HepG2 (cell line): ENCODE measurements at regions of chr2 and their contacts with region 1.

Region 1: DNA sequence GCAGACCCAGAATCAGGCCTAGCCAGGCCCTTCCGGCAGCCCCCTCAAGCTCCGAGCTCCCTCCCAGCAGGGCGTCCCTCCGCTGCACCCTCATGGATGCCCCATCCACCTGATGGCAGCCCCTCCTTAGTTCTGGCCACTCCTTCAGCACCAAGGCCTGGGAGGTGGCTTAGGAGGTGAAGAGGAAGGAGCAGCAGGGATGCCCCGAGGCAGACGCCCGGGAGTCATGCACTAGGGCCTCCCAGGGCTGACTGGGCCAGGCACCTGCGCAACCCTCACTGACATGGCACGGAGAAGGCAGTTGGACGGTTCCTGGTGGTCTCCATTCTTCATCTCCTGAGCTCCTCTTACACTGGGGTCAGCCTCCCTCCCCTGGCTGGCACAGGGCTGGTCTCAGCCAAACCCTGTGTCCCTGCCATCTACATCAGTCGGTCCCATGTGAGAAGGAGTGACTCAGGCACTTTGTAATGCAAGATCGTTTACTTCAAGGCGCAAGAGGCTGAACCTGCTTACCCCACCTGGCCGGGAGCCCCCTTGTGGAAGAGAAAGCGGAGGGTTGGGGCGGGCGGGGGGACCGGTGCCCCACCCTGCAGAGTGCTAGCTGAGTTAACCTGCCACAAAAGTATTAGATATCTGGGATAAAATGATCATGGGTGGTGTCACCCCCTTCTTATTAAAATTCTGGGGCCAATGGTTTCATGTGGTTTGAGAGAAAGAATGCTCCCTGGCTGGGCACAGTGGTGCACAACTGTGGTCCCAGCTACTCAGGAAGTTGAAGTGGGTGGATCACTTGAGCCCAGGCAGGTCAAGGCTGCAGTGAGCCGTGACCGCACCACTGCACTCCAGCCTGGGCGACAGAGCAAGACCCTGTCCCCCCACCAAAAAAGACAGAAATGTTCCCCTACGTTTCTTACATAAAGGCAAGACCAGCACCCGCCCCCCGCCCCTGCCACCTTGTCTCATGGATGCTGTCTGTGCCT is 53.3 kb upstream of the ID2 start:
- DNase-seq: no peak
- ATAC-seq: no peak
- H3K4me3 ChIP-seq: peak overlapping the region in 1 of 3 experiments; percentile 80; a peak in 1 of 6 replicates
- H3K27ac ChIP-seq: peak overlapping the region; percentile 84
- H3K4me1 ChIP-seq: peaks cover 100% of the 10 kb centered on the region
- H3K27me3 ChIP-seq: no peaks in the 10 kb centered on the region; a peak in 1 of 5 replicates
- CTCF ChIP-seq: no peak
- EP300 ChIP-seq: no peak
- POLR2A ChIP-seq: no peak
- RAD21 ChIP-seq: no peak

Region 2: GRCh38 chr2:8229546-8229986 is 399.0 kb before region 1 on chr2:
- CTCF ChIA-PET with region 1: no interaction called
- POLR2A ChIA-PET with region 1: no interaction called
- in situ Hi-C with region 1: no loop called
- intact Hi-C with region 1: no loop called
- DNase-seq: peak; percentile 28
- ATAC-seq: peak; percentile 68
- H3K4me3 ChIP-seq: no peak overlapping the region
- H3K27ac ChIP-seq: no peak overlapping the region
- H3K4me1 ChIP-seq: no peaks in the 10 kb centered on the region
- H3K27me3 ChIP-seq: 0 out of 5 replicates have a peak, but pooled peaks cover 0 to under 1% of the 10 kb centered on the region in 2 experiments
- CTCF ChIP-seq: no peak
- EP300 ChIP-seq: no peak
- POLR2A ChIP-seq: no peak
- RAD21 ChIP-seq: no peak

Region 3: GRCh38 chr2:8412586-8412985 is 215.9 kb before region 1 on chr2:
- CTCF ChIA-PET with region 1: no interaction called
- POLR2A ChIA-PET with region 1: no interaction called
- in situ Hi-C with region 1: no loop called
- intact Hi-C with region 1: loop called (anchors 10 kb)
- DNase-seq: no peak
- ATAC-seq: no peak; the same call in 2 of the 3 replicates
- H3K4me3 ChIP-seq: no peak overlapping the region
- H3K27ac ChIP-seq: peak overlapping the region; percentile 80
- H3K4me1 ChIP-seq: peaks cover 72% of the 10 kb centered on the region
- H3K27me3 ChIP-seq: no peaks in the 10 kb centered on the region; a peak in 1 of 5 replicates
- CTCF ChIP-seq: no peak
- EP300 ChIP-seq: no peak
- POLR2A ChIP-seq: no peak
- RAD21 ChIP-seq: no peak

Region 4: DNA sequence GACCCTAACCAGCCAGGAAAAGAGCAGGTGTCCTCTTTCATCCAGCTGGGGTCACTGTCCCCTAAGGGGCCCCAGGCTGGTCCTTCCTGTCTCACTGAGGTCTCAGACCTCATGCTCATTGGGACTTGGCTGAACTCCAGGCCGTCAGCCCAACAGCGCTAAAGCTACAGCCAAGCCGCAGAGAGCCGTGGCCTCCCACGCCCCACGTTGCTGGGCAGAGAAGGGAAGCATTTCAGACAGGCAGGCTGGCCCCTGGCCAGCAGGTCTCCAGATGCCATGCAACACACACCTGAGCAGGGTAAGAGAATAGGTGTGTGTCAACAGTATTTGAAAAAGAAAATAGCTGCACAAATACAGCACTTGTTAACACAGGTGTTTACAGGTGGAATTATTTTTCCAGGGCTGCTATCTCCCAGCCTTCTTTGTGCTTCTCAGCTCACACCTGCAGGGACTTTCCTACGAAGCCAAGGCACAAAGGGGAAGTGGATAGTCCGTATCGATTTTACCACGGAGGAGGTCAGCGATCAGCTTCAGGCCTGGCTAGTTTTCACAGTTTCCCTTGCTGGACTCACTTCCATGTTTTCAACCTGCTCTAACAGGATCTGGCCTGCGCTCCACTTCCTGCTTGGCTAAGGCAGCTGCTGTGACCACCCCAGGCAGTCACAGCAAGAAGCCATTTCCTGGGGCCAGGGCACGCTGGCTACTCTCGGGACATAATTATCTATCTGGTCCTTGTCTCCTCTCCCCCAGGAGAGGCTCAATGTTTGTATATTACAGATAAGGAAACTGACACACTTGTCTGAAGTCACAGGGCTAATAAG is 102.7 kb before region 1 on chr2:
- CTCF ChIA-PET with region 1: no interaction called
- POLR2A ChIA-PET with region 1: interaction called, 11 read pairs
- in situ Hi-C with region 1: no loop called
- intact Hi-C with region 1: loop called (anchors 1 kb)
- DNase-seq: peak; percentile 92
- ATAC-seq: peak; percentile 96
- H3K4me3 ChIP-seq: peak overlapping the region; percentile 26 to 64 (median 42)
- H3K27ac ChIP-seq: no peak overlapping the region
- H3K4me1 ChIP-seq: peaks cover 38% of the 10 kb centered on the region
- H3K27me3 ChIP-seq: peaks cover 5 to 33% of the 10 kb centered on the region in 2 experiments; a peak in 4 of 5 replicates
- CTCF ChIP-seq: peak; percentile 97
- EP300 ChIP-seq: peak; percentile 11 to 67; a peak in 2 of 4 replicates
- POLR2A ChIP-seq: no peak
- RAD21 ChIP-seq: peak; percentile 99

Region 5: DNA sequence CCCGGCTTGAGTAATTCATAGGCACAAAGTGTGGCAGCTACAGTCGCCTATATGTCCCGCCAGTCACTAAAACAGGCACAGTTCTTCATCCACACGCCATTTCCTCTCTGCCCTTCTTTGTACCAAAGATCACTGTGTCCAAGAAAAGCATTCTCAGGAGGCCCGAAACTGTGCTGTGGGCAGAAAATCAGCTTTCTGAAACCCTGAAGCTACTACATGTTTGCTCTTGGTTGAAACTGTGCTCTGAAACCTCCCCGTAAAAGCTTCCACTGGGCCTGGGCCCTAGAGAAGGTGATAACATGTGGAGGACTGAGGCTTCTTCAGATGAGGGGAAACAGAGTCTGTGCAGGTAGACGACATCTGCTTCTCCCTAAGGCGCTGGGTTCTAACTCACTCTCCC is 22.3 kb before region 1 on chr2:
- CTCF ChIA-PET with region 1: no interaction called
- POLR2A ChIA-PET with region 1: interaction called, 112 read pairs
- in situ Hi-C with region 1: no loop called
- intact Hi-C with region 1: no loop called
- DNase-seq: no peak
- ATAC-seq: no peak
- H3K4me3 ChIP-seq: no peak overlapping the region
- H3K27ac ChIP-seq: no peak overlapping the region
- H3K4me1 ChIP-seq: peaks cover 66% of the 10 kb centered on the region
- H3K27me3 ChIP-seq: no peaks in the 10 kb centered on the region
- CTCF ChIP-seq: no peak
- EP300 ChIP-seq: no peak
- POLR2A ChIP-seq: no peak
- RAD21 ChIP-seq: no peak

Region 6: GRCh38 chr2:8612734-8613179 is 15.8 kb before region 1 on chr2:
- CTCF ChIA-PET with region 1: no interaction called
- POLR2A ChIA-PET with region 1: interaction called, 112 read pairs
- in situ Hi-C with region 1: no loop called
- intact Hi-C with region 1: loop called (anchors 1 kb)
- DNase-seq: peak; percentile 91
- ATAC-seq: peak; percentile 67
- H3K4me3 ChIP-seq: peak overlapping the region in 1 of 3 experiments; percentile 38; a peak in 2 of 6 replicates
- H3K27ac ChIP-seq: peak overlapping the region; percentile 72
- H3K4me1 ChIP-seq: peaks cover 66% of the 10 kb centered on the region
- H3K27me3 ChIP-seq: no peaks in the 10 kb centered on the region
- CTCF ChIP-seq: no peak; the same call in 1 of the 2 replicates
- EP300 ChIP-seq: peak in 1 of 2 experiments; percentile 88; a peak in 1 of 4 replicates
- POLR2A ChIP-seq: no peak
- RAD21 ChIP-seq: peak; percentile 14; the same call in 1 of the 2 replicates

Region 7: DNA sequence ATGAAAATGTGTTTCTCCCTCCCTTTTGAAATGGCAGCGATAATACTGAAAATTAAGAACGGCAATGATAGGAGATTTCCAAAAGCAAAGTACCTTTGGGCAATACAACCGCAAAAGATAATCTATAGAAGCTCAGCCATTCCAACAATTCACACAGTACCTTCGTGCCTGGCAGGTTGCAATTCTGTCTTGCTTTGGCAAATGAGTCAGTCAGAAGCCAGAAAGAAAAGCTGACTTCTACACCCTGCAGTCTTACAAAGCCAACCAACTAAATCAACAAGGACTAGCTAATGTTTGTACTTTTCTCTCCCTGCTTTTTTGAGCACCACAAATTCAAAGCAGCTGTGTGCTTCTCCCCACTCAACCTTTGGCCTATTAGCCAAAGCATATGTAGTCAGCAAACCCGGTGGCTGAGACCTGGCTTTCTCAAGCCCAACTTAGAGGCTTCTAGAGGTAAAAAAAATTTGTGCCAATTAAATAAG is 27.7 kb after region 1 on chr2:
- CTCF ChIA-PET with region 1: interaction called, 3 read pairs
- POLR2A ChIA-PET with region 1: interaction called, 9 read pairs
- in situ Hi-C with region 1: no loop called
- intact Hi-C with region 1: loop called (anchors 1 kb)
- DNase-seq: peak; percentile 94
- ATAC-seq: peak; percentile 75
- H3K4me3 ChIP-seq: peak overlapping the region in 2 of 3 experiments; percentile 3 to 6; a peak in 1 of 6 replicates
- H3K27ac ChIP-seq: peak overlapping the region; percentile 62
- H3K4me1 ChIP-seq: peaks cover 81% of the 10 kb centered on the region
- H3K27me3 ChIP-seq: no peaks in the 10 kb centered on the region
- CTCF ChIP-seq: peak; percentile 28
- EP300 ChIP-seq: peak in 1 of 2 experiments; percentile 84; a peak in 2 of 4 replicates
- POLR2A ChIP-seq: 0 out of 4 replicates have a peak, but pooled peaks of 1 of the 2 experiments have one; percentile 14
- RAD21 ChIP-seq: peak; percentile 31; the same call in 1 of the 2 replicates